ENCODE measurements at regions of chr12 and their contacts with region 1.

Region 1: GRCh38 chr12:68451261-68452077 is 119.3 kb upstream of the MDM1 start:
- DNase-seq: peak; percentile 87
- H3K4me3 Mint-ChIP-seq: peak overlapping the region; percentile 52
- H3K27ac Mint-ChIP-seq: peak overlapping the region; percentile 98
- H3K4me1 Mint-ChIP-seq: peaks cover 81% of the 10 kb centered on the region
- H3K27me3 Mint-ChIP-seq: no peaks in the 10 kb centered on the region

Region 2: GRCh38 chr12:68374307-68374982 is 77.0 kb before region 1 on chr12:
- intact Hi-C with region 1: loop called (anchors 1 kb)
- DNase-seq: peak; percentile 87
- H3K4me3 Mint-ChIP-seq: peak overlapping the region; percentile 68
- H3K27ac Mint-ChIP-seq: peak overlapping the region; percentile 90
- H3K4me1 Mint-ChIP-seq: peaks cover 41% of the 10 kb centered on the region
- H3K27me3 Mint-ChIP-seq: no peaks in the 10 kb centered on the region

Region 3: GRCh38 chr12:68397566-68398158 is 53.8 kb before region 1 on chr12:
- intact Hi-C with region 1: no loop called
- DNase-seq: no peak
- H3K4me3 Mint-ChIP-seq: no peak overlapping the region
- H3K27ac Mint-ChIP-seq: no peak overlapping the region
- H3K4me1 Mint-ChIP-seq: peaks cover 4% of the 10 kb centered on the region
- H3K27me3 Mint-ChIP-seq: no peaks in the 10 kb centered on the region

Region 4: DNA sequence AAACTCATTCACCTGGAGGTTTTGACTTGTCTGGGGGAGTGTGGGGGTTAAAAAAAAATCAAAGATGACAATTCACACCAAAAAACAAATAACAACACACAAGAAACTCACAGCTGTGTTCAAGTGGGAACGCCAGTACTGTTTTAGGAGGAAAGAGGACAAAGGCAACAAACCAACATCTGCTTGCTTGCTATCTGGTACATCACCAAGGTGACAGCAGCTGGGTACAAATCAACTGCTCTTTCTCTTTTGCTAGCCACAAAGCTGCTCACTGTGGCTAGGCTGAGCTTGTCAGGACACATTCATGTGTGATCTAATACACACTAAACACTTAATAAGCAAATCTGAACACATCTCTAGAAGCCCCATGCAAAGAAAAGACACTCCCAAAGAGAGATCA is 31.2 kb after region 1 on chr12:
- intact Hi-C with region 1: loop called (anchors 1 kb)
- DNase-seq: peak; percentile 84
- H3K4me3 Mint-ChIP-seq: peak overlapping the region; percentile 46
- H3K27ac Mint-ChIP-seq: peak overlapping the region; percentile 92
- H3K4me1 Mint-ChIP-seq: peaks cover 34% of the 10 kb centered on the region
- H3K27me3 Mint-ChIP-seq: no peaks in the 10 kb centered on the region

Region 5: DNA sequence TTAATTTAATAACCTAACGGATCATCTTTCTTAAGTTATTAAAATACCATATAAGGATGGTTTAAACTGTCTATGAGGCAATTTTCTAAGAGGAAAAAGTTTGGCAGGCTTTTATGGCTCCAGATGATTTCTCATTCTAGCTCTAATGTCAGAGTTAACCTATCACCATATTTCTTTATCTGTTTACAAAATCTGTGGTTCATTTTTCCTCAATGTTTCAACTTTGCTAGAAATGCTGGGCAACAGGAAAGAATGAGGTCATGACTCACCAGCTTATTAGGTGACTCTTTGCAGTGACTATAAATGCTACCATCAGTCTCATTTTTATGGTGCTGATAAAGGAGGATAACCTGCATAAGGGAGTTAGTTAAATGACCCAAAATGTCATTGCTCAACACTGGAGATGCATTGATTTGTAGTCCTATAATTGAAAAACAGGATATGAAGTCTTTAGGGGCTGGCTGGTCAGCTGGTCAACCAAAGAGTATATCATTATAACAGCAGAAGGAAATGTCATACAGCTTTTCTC is 114.0 kb after region 1 on chr12:
- intact Hi-C with region 1: loop called (anchors 1 kb)
- DNase-seq: peak; percentile 66
- H3K4me3 Mint-ChIP-seq: peak overlapping the region; percentile 22
- H3K27ac Mint-ChIP-seq: peak overlapping the region; percentile 18
- H3K4me1 Mint-ChIP-seq: peaks cover 21% of the 10 kb centered on the region
- H3K27me3 Mint-ChIP-seq: no peaks in the 10 kb centered on the region

Region 6: GRCh38 chr12:68641138-68641537 is 189.7 kb after region 1 on chr12:
- intact Hi-C with region 1: loop called (anchors 1 kb)
- DNase-seq: peak; percentile 86
- H3K4me3 Mint-ChIP-seq: peak overlapping the region; percentile 64
- H3K27ac Mint-ChIP-seq: peak overlapping the region; percentile 60
- H3K4me1 Mint-ChIP-seq: peaks cover 48% of the 10 kb centered on the region
- H3K27me3 Mint-ChIP-seq: no peaks in the 10 kb centered on the region